Tibial artery (tissue), 4 donors: ENCODE measurements at regions of chr13 and their contacts with region 1.

Region 1: DNA sequence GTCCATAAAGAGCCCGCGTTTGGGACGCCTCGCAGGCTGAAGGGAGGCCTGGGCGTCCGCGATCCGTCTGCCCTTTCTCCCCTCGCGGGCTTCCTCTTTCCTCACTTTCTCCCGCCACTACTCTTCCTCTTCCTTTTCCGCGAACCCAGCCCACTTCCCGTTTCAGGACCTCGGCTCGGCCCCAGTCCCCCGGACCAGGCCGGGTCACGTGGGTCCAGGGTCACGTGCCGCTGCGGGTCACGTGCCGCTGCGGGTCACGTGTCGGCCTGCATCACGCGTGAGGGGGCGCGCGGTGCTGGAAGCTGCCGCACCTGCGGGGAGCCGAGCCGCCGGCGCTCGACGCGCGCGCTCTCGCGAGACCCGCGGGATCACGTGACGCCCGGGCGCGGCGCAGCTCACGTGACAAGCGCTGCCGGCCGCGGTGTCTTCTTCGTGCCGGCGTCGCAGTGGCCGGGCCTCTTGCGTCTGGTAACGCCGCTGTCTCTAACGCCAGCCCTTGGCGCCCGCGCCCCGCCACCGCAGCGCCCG is at the start of gene LAMP1:
- DNase-seq: peak; percentile 97 to 99
- H3K4me3 ChIP-seq: peak within 1 kb of the TSS; percentile 72 to 99
- H3K27ac ChIP-seq: peak within 1 kb of the TSS; percentile 92 to 93
- H3K4me1 ChIP-seq: peaks cover 0 to 31% (median 21%) of the 10 kb centered on the region in 4 donors
- H3K27me3 ChIP-seq: no peaks in the 10 kb centered on the region
- CTCF ChIP-seq: peak in 1 of 2 experiments; percentile 30

Region 2: DNA sequence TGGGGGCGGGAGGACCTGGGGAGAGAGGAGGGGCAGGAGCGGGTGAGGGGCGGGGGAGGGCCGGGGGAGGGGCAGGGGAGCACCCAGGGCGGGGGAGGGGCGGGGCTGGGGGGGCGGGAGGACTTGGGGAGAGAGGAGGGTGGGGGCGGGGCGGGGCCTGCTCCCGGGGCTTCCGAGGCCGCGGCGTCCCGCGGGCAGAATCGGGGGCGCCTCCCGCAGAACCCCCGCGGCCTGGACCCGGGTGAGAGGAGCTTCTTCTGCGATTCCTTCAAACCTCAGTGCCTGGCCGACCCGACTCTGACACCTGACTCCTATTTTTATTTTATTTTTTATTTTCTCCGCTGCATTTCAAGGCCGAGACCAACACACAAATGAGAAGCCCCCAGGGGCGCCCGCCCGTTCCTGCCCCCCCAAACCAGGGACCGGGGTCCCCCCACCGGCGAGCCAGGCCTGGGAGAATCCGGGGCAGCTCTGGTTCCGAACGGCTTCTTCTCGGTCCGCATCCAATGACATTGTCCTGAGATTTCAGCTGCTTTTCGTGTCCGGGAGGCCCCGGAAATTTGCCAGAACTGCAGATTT is 67.5 kb after region 1 on chr13:
- intact Hi-C with region 1: loop called (anchors 5 kb)
- DNase-seq: peak in 1 of 2 donors; percentile 66
- H3K4me3 ChIP-seq: peak overlapping the region; percentile 56 to 72
- H3K27ac ChIP-seq: peak overlapping the region; percentile 75
- H3K4me1 ChIP-seq: peaks cover 0 to 21% (median 16%) of the 10 kb centered on the region in 4 donors
- H3K27me3 ChIP-seq: peaks cover 0 to 3% of the 10 kb centered on the region in 2 donors
- CTCF ChIP-seq: no peak

Region 3: GRCh38 chr13:113490496-113491417 is 193.9 kb after region 1 on chr13 and contains the start of gene DCUN1D2:
- intact Hi-C with region 1: loop called (anchors 10 kb)
- DNase-seq: peak; percentile 92 to 97
- H3K4me3 ChIP-seq: peak within 1 kb of the TSS; percentile 89 to 95
- H3K27ac ChIP-seq: peak within 1 kb of the TSS; percentile 92 to 94
- H3K4me1 ChIP-seq: peaks cover 0 to 64% (median 55%) of the 10 kb centered on the region in 4 donors
- H3K27me3 ChIP-seq: no peaks in the 10 kb centered on the region
- CTCF ChIP-seq: no peak